ENCODE measurements at regions of chr22 and their contacts with region 1.

Region 1: GRCh38 chr22:40436505-40437451 is 66.4 kb downstream of the SGSM3 start:
- DNase-seq: no peak
- H3K4me3 Mint-ChIP-seq: no peak overlapping the region
- H3K27ac Mint-ChIP-seq: no peak overlapping the region
- H3K4me1 Mint-ChIP-seq: peaks cover 40% of the 10 kb centered on the region
- H3K27me3 Mint-ChIP-seq: no peaks in the 10 kb centered on the region

Region 2: DNA sequence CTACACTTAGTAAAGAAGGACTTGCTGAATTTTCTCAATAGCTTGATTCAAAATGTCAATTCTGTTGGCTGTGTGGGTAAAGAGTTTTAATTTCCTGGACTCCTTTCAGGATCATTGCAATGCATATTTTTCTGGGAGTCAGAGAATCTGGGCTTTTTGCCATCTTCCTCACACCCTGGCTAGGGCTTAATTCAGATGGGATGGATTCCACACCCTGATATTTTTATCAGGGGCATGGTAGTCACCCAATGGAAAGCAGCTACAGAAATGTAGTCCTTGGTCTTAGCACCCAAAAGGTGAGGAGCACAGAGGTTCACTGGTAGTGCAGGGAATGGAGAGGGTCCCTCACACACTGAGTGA is 12.9 kb after region 1 on chr22:
- CTCF ChIA-PET with region 1: interaction called, 20 read pairs
- POLR2A ChIA-PET with region 1: no interaction called
- DNase-seq: no peak
- H3K4me3 Mint-ChIP-seq: no peak overlapping the region
- H3K27ac Mint-ChIP-seq: no peak overlapping the region
- H3K4me1 Mint-ChIP-seq: peaks cover 37% of the 10 kb centered on the region
- H3K27me3 Mint-ChIP-seq: no peaks in the 10 kb centered on the region

Region 3: DNA sequence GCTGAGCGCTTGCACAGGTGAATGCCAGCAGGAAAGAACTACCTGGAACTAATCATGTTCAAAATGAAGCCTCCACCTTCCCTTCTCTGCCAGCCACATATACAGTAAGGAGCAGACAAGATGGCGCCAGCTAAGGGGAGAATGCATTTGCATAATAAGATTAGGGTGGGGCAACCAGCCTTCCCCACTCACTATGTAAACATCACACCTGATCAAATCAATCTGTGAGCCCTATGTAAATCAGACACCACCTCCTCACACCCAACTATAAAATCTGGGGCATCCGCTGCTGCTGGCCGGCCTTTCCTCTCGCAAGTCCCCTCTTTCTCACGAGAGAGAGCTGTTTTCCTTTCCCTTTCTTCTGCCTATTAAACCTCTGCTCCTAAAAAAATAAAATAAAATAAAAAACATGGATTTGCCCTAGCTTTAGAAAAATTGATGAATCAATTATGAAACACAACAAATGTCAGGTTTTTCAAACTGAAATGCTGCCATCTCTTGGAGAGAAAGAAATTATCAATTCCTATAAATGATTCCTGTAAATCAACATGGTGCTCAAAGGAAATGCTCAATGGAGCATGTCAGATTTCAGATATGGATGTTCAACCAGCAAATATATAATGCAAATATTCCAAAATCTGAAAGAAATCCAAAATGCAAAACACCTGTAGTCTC is 42.5 kb after region 1 on chr22:
- CTCF ChIA-PET with region 1: interaction called, 33 read pairs
- POLR2A ChIA-PET with region 1: interaction called, 4 read pairs
- DNase-seq: no peak
- H3K4me3 Mint-ChIP-seq: no peak overlapping the region
- H3K27ac Mint-ChIP-seq: no peak overlapping the region
- H3K4me1 Mint-ChIP-seq: peaks cover 27% of the 10 kb centered on the region
- H3K27me3 Mint-ChIP-seq: no peaks in the 10 kb centered on the region

Region 4: DNA sequence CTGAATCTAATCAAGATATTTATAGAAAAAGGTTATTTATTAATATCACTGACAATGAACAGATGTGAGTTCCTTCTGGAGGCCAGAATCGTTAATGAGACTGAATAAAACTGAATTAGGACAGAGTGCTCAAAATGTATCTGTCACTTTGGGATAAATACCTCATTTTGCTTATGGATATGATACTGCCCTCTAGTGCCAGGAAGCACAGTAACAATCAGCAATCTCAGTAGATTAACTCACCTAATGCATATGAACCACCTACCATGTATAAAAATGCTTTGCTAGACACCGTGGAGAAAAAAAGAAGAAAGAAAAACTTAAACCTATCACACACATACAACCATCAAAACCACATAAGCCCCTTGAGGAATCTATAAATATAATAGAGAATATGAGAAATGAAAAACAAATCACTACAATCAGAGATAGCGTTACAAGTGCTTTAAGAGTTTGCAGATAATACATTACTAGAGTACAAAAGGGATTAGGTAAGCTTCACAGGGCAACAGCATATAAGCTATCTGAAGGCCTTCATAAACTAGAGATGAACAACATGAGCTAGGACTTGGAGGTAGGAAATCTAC is 51.0 kb after region 1 on chr22:
- CTCF ChIA-PET with region 1: interaction called, 61 read pairs
- POLR2A ChIA-PET with region 1: interaction called, 5 read pairs
- DNase-seq: no peak
- H3K4me3 Mint-ChIP-seq: no peak overlapping the region
- H3K27ac Mint-ChIP-seq: no peak overlapping the region
- H3K4me1 Mint-ChIP-seq: peaks cover 21% of the 10 kb centered on the region
- H3K27me3 Mint-ChIP-seq: no peaks in the 10 kb centered on the region

Region 5: GRCh38 chr22:40636380-40637182 is 199.8 kb after region 1 on chr22 and contains the start of gene MRTFA:
- CTCF ChIA-PET with region 1: interaction called, 11 read pairs
- POLR2A ChIA-PET with region 1: interaction called, 7 read pairs
- DNase-seq: peak; percentile 100
- H3K4me3 Mint-ChIP-seq: peak within 1 kb of the TSS; percentile 91
- H3K27ac Mint-ChIP-seq: peak within 1 kb of the TSS; percentile 91
- H3K4me1 Mint-ChIP-seq: peaks cover 31% of the 10 kb centered on the region
- H3K27me3 Mint-ChIP-seq: no peaks in the 10 kb centered on the region
- total RNA-seq, gene MRTFA: 58.5 to 61.5 TPM

Region 6: GRCh38 chr22:40645579-40646197 is 208.9 kb after region 1 on chr22:
- CTCF ChIA-PET with region 1: interaction called, 93 read pairs
- POLR2A ChIA-PET with region 1: interaction called, 9 read pairs
- DNase-seq: no peak
- H3K4me3 Mint-ChIP-seq: no peak overlapping the region
- H3K27ac Mint-ChIP-seq: no peak overlapping the region
- H3K4me1 Mint-ChIP-seq: peaks cover 21% of the 10 kb centered on the region
- H3K27me3 Mint-ChIP-seq: peaks cover 3% of the 10 kb centered on the region

Region 7: GRCh38 chr22:40651563-40652501 is 215.1 kb after region 1 on chr22:
- CTCF ChIA-PET with region 1: interaction called, 93 read pairs
- POLR2A ChIA-PET with region 1: interaction called, 9 read pairs
- DNase-seq: peak; percentile 87
- H3K4me3 Mint-ChIP-seq: peak overlapping the region; percentile 72
- H3K27ac Mint-ChIP-seq: peak overlapping the region; percentile 83
- H3K4me1 Mint-ChIP-seq: peaks cover 29% of the 10 kb centered on the region
- H3K27me3 Mint-ChIP-seq: no peaks in the 10 kb centered on the region

Measured in activated CD4-positive, alpha-beta memory T cell treated with anti-CD3 and anti-CD28 coated beads, Interleukin-2, amount 10 ng/mL, durations not matched to agents 7 days and 5 days (primary cell).